ENCODE measurements at regions of chr12 and their contacts with region 1.

Region 1: DNA sequence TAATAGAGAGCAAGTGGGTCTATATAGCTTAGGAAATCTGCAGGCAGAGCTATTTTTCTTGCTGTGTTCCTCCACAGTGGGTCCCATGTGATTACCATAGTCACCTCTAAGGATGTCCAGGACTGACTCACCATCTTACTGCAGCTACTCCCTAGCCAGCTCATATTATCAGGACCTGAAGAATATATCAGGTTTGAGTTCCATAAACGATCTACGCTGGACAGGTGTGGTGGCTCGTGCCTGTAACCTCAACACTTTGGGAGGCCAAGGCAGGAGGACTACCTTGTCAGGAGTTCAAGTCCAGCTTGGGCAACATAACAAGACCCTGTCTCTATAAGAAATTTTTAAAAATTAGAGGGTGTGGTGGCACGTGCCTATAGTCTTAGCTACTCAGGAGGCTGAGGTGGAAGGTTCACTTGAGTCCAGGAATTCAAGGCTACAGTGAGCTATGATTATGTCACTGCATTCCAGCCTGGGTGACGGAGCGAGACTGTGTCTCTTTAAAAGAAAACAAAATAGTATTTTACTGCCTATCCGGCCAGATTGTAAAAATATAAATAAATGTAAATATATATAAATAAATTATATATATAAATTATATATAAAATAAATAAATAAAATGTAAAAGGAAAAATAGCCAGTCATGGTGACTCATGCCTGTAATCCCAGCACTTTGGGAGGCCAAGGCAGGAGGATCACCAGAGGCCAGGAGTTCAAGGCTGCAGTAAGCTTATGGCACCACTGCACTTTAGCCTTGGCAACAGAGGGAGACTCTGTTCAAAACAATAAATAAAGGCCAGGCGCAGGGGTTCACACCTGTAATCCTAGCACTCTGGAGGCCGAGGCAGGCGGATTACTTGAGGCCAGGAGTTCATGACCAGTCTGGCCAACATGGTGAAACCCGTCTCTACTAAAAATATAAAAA is 6.9 kb upstream of the SPRYD4 start:
- DNase-seq: no peak
- H3K4me3 Mint-ChIP-seq: no peak overlapping the region
- H3K27ac Mint-ChIP-seq: no peak overlapping the region
- H3K4me1 Mint-ChIP-seq: peaks cover 8% of the 10 kb centered on the region
- H3K27me3 Mint-ChIP-seq: no peaks in the 10 kb centered on the region

Region 2: GRCh38 chr12:56448860-56449621 is 12.5 kb before region 1 on chr12 and contains the start of gene TIMELESS:
- CTCF ChIA-PET with region 1: interaction called, 38 read pairs
- POLR2A ChIA-PET with region 1: no interaction called
- DNase-seq: peak; percentile 88
- H3K4me3 Mint-ChIP-seq: peak within 1 kb of the TSS; percentile 86
- H3K27ac Mint-ChIP-seq: peak within 1 kb of the TSS; percentile 89
- H3K4me1 Mint-ChIP-seq: peaks cover 37% of the 10 kb centered on the region
- H3K27me3 Mint-ChIP-seq: no peaks in the 10 kb centered on the region
- total RNA-seq, gene TIMELESS: 59.5 to 63.6 TPM

Region 3: DNA sequence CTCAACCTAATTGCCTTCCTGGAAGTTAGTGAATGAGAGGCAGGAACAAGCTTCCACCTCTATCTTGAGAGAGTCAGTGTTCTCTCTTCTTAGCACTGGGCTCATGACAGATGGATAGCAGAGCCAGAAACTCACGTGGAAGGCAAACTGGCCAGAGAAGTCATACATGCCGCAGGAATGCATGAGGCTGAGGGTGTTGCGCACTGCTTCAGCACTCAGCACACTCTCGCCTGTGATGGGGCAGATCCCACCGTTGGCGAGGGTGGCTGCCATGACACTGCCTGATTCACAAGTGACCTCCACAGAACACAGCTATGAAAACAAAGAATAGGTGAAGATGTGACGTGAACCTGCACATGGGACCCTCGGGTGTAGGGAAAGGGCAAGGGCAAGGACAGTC is 12.9 kb after region 1 on chr12:
- CTCF ChIA-PET with region 1: interaction called, 14 read pairs
- POLR2A ChIA-PET with region 1: no interaction called
- DNase-seq: no peak
- H3K4me3 Mint-ChIP-seq: no peak overlapping the region
- H3K27ac Mint-ChIP-seq: no peak overlapping the region
- H3K4me1 Mint-ChIP-seq: peaks cover 17% of the 10 kb centered on the region
- H3K27me3 Mint-ChIP-seq: no peaks in the 10 kb centered on the region

Measured in activated CD4-positive, alpha-beta T cell treated with anti-CD3 and anti-CD28 coated beads, Interleukin-2, amount 10 ng/mL, durations not matched to agents 7 days and 5 days (primary cell).